ENCODE measurements at regions of chr5 and their contacts with region 1.

Region 1: GRCh38 chr5:81751009-81751835 is at the start of gene SSBP2:
- DNase-seq: peak; percentile 99 to 100 (median 100)
- H3K4me3 ChIP-seq: peak within 1 kb of the TSS; percentile 93
- H3K27ac ChIP-seq: peak within 1 kb of the TSS; percentile 94 to 96
- H3K4me1 ChIP-seq: peaks cover 1% of the 10 kb centered on the region
- H3K27me3 ChIP-seq: no peaks in the 10 kb centered on the region
- CTCF ChIP-seq: peak in 2 of 3 donors; percentile 19 to 24
- EP300 ChIP-seq: no peak
- POLR2A ChIP-seq: peak; percentile 82
- total RNA-seq, gene SSBP2: 42.0 to 126 (median 78.2) TPM

Region 2: GRCh38 chr5:81425569-81425968 is 325.7 kb before region 1 on chr5:
- intact Hi-C with region 1: loop called in 1 of 4 experiments (anchors 10 kb)
- DNase-seq: no peak
- H3K4me3 ChIP-seq: no peak overlapping the region
- H3K27ac ChIP-seq: no peak overlapping the region
- H3K4me1 ChIP-seq: peaks cover 3% of the 10 kb centered on the region
- H3K27me3 ChIP-seq: no peaks in the 10 kb centered on the region
- CTCF ChIP-seq: peak; percentile 40 to 60 (median 45)
- EP300 ChIP-seq: no peak
- POLR2A ChIP-seq: no peak

Region 3: DNA sequence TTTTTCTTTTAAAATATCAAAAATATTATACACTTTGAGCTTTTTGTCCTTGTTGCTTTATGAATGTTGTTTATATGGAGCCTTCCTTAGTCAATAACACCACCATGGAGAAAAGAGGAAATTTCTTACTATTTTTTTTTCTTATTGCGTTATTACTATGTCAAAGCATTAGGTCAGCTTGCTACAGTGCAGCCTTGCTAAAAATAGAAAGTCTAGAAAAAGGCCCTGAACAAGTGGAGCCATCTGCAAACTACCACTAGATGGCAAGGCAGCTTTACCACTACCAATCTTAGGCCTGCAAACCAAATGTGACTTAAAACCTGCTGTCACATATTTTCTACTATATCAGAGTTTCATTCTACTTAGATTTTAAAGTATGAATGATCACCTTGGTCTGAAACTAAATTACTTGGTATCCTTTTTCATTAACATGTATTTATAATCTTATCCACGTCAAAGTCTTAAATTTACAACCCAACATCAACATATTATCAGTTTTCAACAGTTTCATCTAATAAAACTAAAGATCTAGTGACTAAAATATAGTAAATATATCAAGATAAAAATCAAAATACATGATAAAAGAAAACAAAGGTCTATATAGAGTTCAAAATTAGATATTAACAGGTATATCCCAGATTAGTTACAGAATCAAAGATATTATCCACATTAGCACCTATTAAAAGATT is 244.2 kb before region 1 on chr5:
- intact Hi-C with region 1: loop called in 3 of 4 experiments (anchors 5 to 10 kb)
- DNase-seq: peak in 4 of 5 donors; percentile 36 to 74 (median 48)
- H3K4me3 ChIP-seq: no peak overlapping the region
- H3K27ac ChIP-seq: peak overlapping the region in 1 of 2 donors; percentile 77
- H3K4me1 ChIP-seq: no peaks in the 10 kb centered on the region
- H3K27me3 ChIP-seq: no peaks in the 10 kb centered on the region
- CTCF ChIP-seq: peak; percentile 61 to 91 (median 87)
- EP300 ChIP-seq: no peak
- POLR2A ChIP-seq: no peak

Region 4: DNA sequence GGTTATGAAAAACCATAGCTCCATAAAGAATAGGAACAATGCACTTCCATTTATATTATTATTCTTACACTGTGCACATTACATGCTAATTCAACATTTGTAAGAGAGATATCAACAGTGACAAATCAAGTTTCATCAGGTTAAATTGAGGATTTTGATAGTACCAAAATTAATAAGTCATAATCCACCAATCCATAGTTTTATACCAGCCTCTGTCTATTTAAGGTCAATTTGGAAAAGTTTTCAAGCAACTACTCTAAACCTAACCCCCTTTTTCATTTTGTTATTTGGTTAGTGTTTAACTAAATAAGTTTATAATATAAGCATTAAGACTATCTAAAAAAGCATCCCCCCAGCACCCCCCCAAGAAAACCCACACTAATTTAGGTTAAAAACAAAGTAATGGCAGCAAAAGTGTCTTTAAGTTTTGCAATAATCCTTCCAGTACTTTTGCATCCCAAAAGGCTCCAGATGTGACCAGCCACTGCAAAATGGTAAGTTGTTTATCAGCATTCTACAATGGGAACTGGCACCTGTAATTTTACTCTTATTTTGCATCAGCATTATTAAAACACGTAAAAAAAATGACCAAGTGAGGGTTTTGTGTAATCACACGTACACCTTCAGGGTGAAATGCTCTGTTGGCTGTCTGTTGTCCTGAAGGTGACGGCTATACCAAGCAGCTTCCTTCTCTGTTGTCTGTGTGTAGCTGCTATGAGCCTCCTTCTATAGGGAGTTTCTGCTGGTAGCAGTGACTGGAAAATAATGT is 36.4 kb after region 1 on chr5:
- intact Hi-C with region 1: loop called in 2 of 4 experiments (anchors 5 kb)
- DNase-seq: peak in 4 of 5 donors; percentile 45 to 85 (median 72)
- H3K4me3 ChIP-seq: no peak overlapping the region
- H3K27ac ChIP-seq: no peak overlapping the region
- H3K4me1 ChIP-seq: peaks cover 9% of the 10 kb centered on the region
- H3K27me3 ChIP-seq: no peaks in the 10 kb centered on the region
- CTCF ChIP-seq: no peak
- EP300 ChIP-seq: no peak
- POLR2A ChIP-seq: no peak

Region 5: DNA sequence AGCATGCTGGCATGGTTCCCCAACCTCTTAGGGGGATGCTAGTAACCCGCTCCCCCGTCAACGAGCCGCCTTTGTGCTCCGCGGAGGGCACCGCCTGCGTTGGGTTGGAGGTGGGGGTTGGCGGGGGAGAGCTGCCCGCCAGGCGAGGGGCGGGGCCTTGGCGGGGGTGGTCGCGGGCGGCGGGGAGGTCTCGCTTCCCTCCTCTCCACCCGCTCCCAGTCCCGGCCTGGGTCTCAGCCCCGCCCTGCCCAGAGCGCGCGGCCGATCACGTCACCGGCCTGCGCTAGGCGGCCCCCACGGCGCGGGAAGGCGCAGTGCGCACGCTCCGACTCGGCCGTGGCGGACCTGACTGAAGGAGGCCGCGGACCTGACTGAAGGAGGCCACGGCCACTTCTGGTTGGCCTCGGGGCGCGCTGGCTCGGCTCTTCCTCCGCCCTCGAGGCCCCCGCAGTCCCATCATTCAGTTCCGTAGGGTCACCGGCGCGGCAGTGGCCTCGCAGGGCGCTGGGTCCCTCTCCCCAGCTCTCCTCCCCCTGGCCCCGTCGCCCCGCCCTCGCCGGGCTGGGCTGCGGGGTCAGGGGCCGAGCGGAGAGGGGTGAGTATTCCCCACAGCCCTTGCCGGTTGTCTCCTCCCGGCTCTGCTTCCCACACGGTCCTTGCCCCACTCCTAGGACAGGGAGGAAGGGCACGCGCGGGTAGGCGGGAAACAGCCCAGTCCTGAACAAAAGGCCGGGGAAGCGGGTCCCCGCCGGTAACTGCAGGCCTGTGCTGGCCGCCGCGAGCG is 220.7 kb after region 1 on chr5 and contains the start of gene ATG10:
- intact Hi-C with region 1: loop called in 2 of 4 experiments (anchors 2 to 5 kb)
- DNase-seq: peak; percentile 93 to 96 (median 96)
- H3K4me3 ChIP-seq: peak within 1 kb of the TSS; percentile 67
- H3K27ac ChIP-seq: peak within 1 kb of the TSS; percentile 97 to 100
- H3K4me1 ChIP-seq: no peaks in the 10 kb centered on the region
- H3K27me3 ChIP-seq: no peaks in the 10 kb centered on the region
- CTCF ChIP-seq: peak in 1 of 3 donors; percentile 18
- EP300 ChIP-seq: no peak
- POLR2A ChIP-seq: peak; percentile 98
- total RNA-seq, gene ATG10: 2.6 to 6.1 (median 4.6) TPM

Region 6: GRCh38 chr5:82165740-82166530 is 414.7 kb after region 1 on chr5:
- intact Hi-C with region 1: loop called in 2 of 4 experiments (anchors 5 kb)
- DNase-seq: peak; percentile 67 to 83 (median 75)
- H3K4me3 ChIP-seq: no peak overlapping the region
- H3K27ac ChIP-seq: no peak overlapping the region
- H3K4me1 ChIP-seq: peaks cover 4% of the 10 kb centered on the region
- H3K27me3 ChIP-seq: no peaks in the 10 kb centered on the region
- CTCF ChIP-seq: peak; percentile 75 to 89 (median 84)
- EP300 ChIP-seq: no peak
- POLR2A ChIP-seq: no peak

Region 7: GRCh38 chr5:82851471-82851870 is 1100.2 kb after region 1 on chr5:
- intact Hi-C with region 1: no loop called
- DNase-seq: no peak
- H3K4me3 ChIP-seq: no peak overlapping the region
- H3K27ac ChIP-seq: no peak overlapping the region
- H3K4me1 ChIP-seq: no peaks in the 10 kb centered on the region
- H3K27me3 ChIP-seq: no peaks in the 10 kb centered on the region
- CTCF ChIP-seq: no peak
- EP300 ChIP-seq: no peak
- POLR2A ChIP-seq: no peak

Measured in ovary (tissue), 10 donors.